RWPE1 (cell line): ENCODE measurements at regions of chr6 and their contacts with region 1.

Region 1: DNA sequence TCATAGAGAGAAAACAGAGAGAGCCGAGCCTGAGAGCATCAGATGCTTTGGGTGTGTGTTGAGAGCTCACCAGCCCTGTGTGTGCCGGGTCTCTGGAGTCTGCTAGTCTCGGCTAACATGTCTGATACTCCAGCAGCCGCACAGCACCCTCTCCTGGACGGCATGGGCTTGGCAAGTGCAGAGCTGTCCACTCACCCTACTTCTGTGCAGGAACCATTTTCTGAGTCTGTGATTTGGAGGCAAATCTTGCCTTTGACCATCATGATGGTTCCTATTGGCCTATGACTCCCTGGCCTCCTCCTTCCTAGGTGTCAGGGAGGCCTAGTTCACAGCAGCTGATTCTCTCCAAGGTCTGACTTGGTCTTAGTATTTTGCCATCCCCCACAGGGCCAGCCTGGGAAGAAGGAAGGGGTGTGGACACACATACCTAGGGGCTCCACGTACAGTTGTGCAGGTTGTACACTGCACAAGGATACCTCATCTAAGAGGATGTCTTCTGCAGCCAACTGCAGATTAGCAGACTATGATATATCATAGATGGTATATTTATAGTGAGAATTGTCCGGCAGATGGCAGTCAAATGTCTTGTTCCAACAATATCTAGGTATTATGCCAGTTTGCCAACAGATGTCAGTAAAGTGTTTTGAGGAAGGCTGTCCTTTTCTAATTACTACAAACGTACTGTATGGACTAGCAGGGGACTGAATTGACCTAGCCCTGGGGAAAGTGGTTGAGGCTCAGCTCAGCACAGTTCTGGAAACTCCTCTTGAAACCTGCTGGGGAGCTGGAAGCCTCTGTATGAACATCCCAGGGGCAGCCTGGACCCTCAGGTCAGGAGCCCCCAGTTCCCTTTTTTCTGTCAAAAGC is 13.0 kb downstream of the FGD2 start:
- DNase-seq: peak; percentile 78
- H3K27ac ChIP-seq: peak overlapping the region; percentile 79
- CTCF ChIP-seq: peak; percentile 90

Region 2: DNA sequence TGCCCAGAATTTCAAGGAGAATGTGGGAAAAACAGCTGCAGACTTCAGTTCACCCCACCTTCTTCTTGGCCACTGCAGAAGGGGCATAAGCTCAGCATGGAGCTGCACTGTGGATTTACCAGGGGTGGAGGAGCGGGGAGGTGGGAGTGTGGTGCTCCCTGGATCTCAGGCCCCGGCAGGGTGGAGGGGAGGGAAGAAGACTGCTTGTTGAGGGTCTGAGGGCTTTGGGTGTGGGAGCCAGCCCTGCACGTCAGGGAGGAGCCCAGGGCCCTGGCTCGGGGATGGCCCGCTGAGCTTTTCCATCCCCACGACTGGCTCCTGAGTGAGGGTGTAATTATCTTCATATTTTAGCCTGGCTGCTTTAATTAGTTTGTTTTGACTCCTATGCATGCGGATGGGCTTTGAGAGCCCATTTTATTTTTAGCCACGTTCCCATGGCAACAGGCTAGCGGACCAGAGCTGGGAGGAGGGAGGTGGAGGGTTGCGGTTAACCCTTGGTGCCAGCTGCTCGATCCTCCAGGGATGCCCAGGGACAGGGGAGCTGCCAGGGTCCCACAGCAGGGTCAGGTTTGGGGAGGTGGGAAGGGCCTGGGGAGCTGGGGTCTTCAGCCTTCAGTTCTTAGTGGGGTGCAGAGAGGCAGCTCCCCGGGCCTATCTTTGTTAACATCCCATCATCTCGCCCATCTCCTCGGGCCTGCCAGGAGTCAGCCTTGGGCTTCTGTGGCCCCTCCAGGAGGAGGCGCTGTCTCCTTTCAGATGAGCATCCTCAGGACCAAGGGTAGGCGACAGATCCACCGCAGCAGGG is 252.6 kb before region 1 on chr6:
- CTCF ChIA-PET with region 1: interaction called, 20 read pairs
- POLR2A ChIA-PET with region 1: no interaction called
- DNase-seq: peak; percentile 77
- H3K27ac ChIP-seq: no peak overlapping the region
- CTCF ChIP-seq: peak; percentile 78

Region 3: DNA sequence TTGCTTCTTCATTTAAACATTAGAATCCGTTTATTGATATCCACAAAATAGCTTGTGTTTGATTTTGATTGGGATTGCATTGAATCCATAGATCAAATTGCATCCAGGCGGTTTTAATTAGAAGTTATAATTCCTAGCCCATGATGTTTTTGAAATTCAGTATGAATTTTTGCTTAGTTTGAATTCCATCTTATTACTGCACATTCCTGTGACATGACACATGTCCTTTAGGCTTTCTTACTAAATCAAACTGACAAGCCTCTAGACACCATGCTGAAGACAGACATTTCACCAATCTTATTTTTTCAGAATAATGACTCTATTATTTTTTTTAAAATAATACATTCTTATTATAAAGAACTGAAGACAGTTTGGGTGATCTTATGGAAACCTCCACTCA is 85.3 kb before region 1 on chr6:
- CTCF ChIA-PET with region 1: interaction called, 10 read pairs
- POLR2A ChIA-PET with region 1: no interaction called
- DNase-seq: peak; percentile 61
- H3K27ac ChIP-seq: no peak overlapping the region
- CTCF ChIP-seq: no peak

Region 4: GRCh38 chr6:37007340-37008043 is 10.9 kb before region 1 on chr6:
- CTCF ChIA-PET with region 1: interaction called, 10 read pairs
- POLR2A ChIA-PET with region 1: no interaction called
- DNase-seq: no peak
- H3K27ac ChIP-seq: no peak overlapping the region
- CTCF ChIP-seq: no peak

Region 5: DNA sequence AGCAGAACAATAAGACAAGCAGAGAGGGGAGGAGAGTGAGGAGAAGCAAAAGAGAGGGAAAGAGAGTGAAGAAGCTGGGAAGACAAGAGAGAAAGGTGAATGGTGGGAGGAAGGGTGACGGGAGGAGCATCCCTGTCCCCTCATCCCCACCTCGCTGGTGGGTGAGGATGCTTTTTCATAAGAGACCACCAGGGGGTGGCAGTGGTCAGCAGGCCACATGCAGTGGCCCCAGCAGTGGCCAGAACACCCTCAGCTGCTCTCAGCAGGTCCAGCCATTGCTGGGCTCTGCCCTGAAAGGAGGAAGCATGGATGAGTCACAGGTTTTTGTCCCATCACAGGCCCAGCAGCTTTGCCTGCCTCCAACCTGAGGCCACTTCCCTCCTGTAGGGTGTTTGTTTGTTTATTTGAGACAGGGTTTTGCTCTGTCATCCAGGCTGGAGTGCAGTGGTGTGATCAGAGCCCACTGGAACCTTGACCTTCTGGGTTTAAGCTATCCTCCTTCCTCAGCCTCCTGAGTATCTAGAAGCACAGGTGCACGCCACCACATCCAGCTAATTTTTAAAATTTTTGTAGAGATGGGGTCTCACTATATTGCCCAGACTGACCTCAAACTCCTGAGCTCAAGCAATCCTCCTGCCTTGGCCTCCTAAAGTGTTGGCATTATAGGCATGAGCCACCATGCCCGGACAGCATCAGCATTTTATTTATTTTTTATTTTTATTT is 11.0 kb after region 1 on chr6:
- CTCF ChIA-PET with region 1: interaction called, 10 read pairs
- POLR2A ChIA-PET with region 1: no interaction called
- DNase-seq: no peak
- H3K27ac ChIP-seq: peak overlapping the region; percentile 11; the same call in 1 of the 2 replicates
- CTCF ChIP-seq: peak; percentile 24; the same call in 1 of the 2 replicates

Region 6: DNA sequence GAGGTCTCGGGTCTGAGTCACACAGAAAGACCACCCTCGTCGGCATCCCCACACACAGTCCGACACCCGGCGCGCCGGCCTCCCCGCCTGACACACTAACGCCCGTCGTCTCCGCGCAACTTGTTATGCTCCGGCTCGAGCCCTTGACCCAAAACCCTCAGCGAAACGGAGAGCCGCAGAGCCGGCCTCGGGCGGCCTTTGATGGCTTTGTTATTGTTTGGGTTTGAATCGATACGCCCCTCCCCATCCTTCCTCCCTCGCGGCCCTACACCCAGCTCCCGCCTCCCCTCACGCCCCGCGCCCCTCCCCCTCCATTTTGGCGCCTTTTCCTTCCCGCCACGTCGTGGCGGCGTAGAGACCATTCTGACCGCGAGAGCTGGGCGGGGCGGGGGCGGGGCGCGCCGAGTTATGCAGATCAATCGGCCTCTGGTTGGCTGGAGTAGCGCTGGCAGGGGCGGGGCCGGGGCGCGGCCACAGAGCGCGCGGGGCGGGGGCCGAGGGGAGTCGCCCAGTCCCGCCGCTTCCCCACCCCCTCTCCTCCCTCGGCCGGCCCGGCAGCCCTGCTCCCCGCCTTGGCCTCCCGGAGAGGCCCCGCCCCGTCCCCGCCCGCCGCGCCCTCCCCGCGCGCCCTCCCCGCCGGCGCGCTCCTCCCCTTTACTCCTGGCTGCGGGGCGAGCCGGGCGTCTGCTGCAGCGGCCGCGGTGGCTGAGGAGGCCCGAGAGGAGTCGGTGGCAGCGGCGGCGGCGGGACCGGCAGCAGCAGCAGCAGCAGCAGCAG is 151.3 kb after region 1 on chr6 and contains the start of gene PIM1:
- CTCF ChIA-PET with region 1: interaction called, 29 read pairs
- POLR2A ChIA-PET with region 1: no interaction called
- DNase-seq: peak; percentile 98
- H3K27ac ChIP-seq: peak within 1 kb of the TSS; percentile 96
- CTCF ChIP-seq: no peak

Region 7: DNA sequence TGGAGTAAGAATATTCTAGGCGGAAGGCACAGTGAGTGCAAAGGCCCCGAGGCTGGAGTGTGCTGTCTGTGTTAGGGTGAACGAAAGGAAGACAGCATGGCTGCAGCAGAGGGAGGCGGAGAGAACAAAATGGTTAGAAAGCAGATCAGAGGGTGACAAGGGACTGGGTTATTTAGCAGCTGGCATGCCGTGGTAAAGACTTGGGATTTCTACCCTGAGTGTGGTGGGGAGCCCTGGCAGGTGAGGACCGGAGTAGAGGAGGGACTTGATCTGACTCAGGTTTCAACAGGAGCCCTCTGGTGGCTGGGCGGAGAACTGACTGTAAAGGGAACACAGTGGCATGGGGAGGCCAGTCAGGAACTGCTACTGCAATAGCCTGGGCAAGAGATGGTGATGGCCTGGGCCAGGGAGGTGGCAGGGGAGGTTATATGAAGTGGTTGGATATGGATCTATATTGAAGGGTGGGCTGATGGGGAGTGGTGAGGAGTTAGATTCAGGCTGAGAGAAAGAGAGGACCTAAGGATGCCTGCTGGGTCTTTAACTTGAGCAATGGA is 189.5 kb after region 1 on chr6:
- CTCF ChIA-PET with region 1: interaction called, 70 read pairs
- POLR2A ChIA-PET with region 1: no interaction called
- DNase-seq: peak; percentile 71
- H3K27ac ChIP-seq: no peak overlapping the region
- CTCF ChIP-seq: peak; percentile 76